ENCODE measurements at regions of chr16 and their contacts with region 1.

Region 1: GRCh38 chr16:48244080-48244862 is at the start of gene LONP2:
- DNase-seq: peak; percentile 85
- ATAC-seq: peak; percentile 99
- H3K4me3 ChIP-seq: peak within 1 kb of the TSS; percentile 93
- H3K27ac ChIP-seq: peak within 1 kb of the TSS; percentile 96
- H3K4me1 ChIP-seq: peaks cover 5% of the 10 kb centered on the region
- H3K27me3 ChIP-seq: no peaks in the 10 kb centered on the region
- CTCF ChIP-seq: no peak
- POLR2A ChIP-seq: peak; percentile 56; the same call in 1 of the 2 replicates
- RAD21 ChIP-seq: no peak
- total RNA-seq, gene LONP2: 81.1 and 90.9 TPM in 2 replicates

Region 2: DNA sequence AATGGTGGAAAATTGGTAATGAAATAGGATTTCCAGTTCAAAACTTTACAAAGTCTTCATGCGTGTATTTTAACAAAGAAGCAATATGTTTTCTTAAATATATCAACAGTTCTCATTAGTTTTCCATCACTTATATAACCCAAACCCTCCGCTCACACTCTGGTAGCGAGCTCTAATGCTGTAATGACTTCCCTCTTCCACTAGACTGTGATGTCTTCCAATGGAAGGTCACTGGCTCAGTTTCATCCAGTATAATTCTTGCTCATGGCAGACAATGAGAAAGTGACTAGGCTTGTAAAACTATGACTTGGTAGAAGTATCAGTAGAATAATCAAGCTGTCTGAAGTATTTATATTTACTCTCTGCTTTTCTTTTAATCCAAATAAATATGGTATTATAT is 1133.3 kb before region 1 on chr16:
- CTCF ChIA-PET with region 1: no interaction called
- POLR2A ChIA-PET with region 1: interaction called, 17 read pairs
- dilution Hi-C with region 1: no loop called
- in situ Hi-C with region 1: no loop called
- intact Hi-C with region 1: no loop called
- DNase-seq: no peak
- ATAC-seq: no peak
- H3K4me3 ChIP-seq: no peak overlapping the region
- H3K27ac ChIP-seq: no peak overlapping the region
- H3K4me1 ChIP-seq: no peaks in the 10 kb centered on the region
- H3K27me3 ChIP-seq: no peaks in the 10 kb centered on the region
- CTCF ChIP-seq: no peak
- POLR2A ChIP-seq: no peak
- RAD21 ChIP-seq: no peak

Region 3: GRCh38 chr16:48279199-48279598 is 34.9 kb after region 1 on chr16:
- CTCF ChIA-PET with region 1: interaction called, 4 read pairs
- POLR2A ChIA-PET with region 1: no interaction called
- dilution Hi-C with region 1: no loop called
- in situ Hi-C with region 1: no loop called
- intact Hi-C with region 1: loop called (anchors 1 kb)
- DNase-seq: no peak
- ATAC-seq: no peak
- H3K4me3 ChIP-seq: no peak overlapping the region
- H3K27ac ChIP-seq: no peak overlapping the region
- H3K4me1 ChIP-seq: peaks cover 2% of the 10 kb centered on the region
- H3K27me3 ChIP-seq: no peaks in the 10 kb centered on the region
- CTCF ChIP-seq: no peak
- POLR2A ChIP-seq: no peak
- RAD21 ChIP-seq: no peak

Region 4: GRCh38 chr16:48321317-48322036 is 77.2 kb after region 1 on chr16:
- CTCF ChIA-PET with region 1: no interaction called
- POLR2A ChIA-PET with region 1: no interaction called
- dilution Hi-C with region 1: no loop called
- in situ Hi-C with region 1: no loop called
- intact Hi-C with region 1: loop called (anchors 5 kb)
- DNase-seq: peak; percentile 85
- ATAC-seq: peak; percentile 80
- H3K4me3 ChIP-seq: no peak overlapping the region
- H3K27ac ChIP-seq: peak overlapping the region; percentile 42; the same call in 1 of the 2 replicates
- H3K4me1 ChIP-seq: peaks cover 9% of the 10 kb centered on the region
- H3K27me3 ChIP-seq: no peaks in the 10 kb centered on the region
- CTCF ChIP-seq: no peak
- POLR2A ChIP-seq: no peak
- RAD21 ChIP-seq: no peak

Region 5: DNA sequence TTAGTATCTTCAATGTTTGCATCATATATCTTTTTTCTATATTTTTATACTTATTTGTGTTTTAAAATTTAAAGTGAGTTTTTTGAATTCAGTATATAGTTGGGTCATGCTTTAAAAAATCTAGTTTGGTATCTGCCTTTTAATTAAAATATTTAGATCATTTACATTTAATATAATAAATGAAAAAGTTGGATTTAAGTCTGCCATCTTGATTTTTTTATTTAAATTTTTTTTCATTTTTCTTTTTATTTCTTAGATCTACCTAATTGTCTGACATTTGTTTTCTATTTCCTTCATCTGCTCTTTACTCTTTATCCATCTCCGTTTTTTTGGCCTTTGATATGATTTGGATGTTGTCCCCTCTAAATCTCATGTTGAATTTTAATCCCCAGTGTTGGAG is 415.7 kb after region 1 on chr16:
- CTCF ChIA-PET with region 1: no interaction called
- POLR2A ChIA-PET with region 1: interaction called, 10 read pairs
- dilution Hi-C with region 1: no loop called
- in situ Hi-C with region 1: no loop called
- intact Hi-C with region 1: no loop called
- DNase-seq: no peak
- ATAC-seq: no peak
- H3K4me3 ChIP-seq: no peak overlapping the region
- H3K27ac ChIP-seq: no peak overlapping the region
- H3K4me1 ChIP-seq: no peaks in the 10 kb centered on the region
- H3K27me3 ChIP-seq: no peaks in the 10 kb centered on the region
- CTCF ChIP-seq: no peak
- POLR2A ChIP-seq: no peak
- RAD21 ChIP-seq: no peak